Activated CD4-positive, alpha-beta T cell treated with anti-CD3 and anti-CD28 coated beads, Interleukin-2, amount 10 ng/mL, durations not matched to agents 24 days and 14 days (primary cell): ENCODE measurements at regions of chr9 and their contacts with region 1.

Region 1: DNA sequence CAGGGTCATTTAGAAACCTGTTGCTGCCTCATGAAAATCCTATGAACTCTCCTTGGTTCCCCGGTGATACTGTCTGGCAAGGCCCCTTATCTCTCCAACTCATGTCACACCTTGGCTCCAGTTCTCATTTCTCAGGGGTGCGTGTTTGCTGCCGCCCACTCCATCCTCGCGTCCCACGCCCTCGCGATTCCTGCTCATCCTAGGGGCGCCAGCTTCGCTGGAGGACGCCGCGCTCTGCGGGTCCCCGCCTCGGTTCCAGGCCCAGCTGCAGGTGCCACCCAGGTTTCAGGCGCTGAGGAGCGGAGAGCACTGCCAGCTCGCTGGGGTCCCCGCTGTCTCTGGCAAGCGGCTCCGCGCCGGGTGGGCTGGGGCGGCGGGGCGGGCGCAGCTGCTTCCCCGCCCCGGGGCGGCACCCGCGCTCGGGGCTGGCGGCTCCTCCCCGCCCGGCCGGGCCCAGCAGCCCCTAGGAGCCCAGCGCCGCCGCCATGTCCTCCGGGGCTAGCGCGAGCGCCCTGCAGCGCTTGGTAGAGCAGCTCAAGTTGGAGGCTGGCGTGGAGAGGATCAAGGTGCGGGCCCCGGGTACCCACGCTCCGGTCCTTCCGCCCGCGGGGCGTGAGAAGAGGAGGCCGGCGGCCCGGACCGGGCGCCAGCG is at the start of gene GNG10:
- DNase-seq: peak; percentile 92
- H3K4me3 Mint-ChIP-seq: peak within 1 kb of the TSS; percentile 90
- H3K27ac Mint-ChIP-seq: peak within 1 kb of the TSS; percentile 97
- H3K4me1 Mint-ChIP-seq: peaks cover 28% of the 10 kb centered on the region
- H3K27me3 Mint-ChIP-seq: no peaks in the 10 kb centered on the region
- total RNA-seq, gene GNG10: 30.9 and 31.7 TPM in 2 replicates

Region 2: DNA sequence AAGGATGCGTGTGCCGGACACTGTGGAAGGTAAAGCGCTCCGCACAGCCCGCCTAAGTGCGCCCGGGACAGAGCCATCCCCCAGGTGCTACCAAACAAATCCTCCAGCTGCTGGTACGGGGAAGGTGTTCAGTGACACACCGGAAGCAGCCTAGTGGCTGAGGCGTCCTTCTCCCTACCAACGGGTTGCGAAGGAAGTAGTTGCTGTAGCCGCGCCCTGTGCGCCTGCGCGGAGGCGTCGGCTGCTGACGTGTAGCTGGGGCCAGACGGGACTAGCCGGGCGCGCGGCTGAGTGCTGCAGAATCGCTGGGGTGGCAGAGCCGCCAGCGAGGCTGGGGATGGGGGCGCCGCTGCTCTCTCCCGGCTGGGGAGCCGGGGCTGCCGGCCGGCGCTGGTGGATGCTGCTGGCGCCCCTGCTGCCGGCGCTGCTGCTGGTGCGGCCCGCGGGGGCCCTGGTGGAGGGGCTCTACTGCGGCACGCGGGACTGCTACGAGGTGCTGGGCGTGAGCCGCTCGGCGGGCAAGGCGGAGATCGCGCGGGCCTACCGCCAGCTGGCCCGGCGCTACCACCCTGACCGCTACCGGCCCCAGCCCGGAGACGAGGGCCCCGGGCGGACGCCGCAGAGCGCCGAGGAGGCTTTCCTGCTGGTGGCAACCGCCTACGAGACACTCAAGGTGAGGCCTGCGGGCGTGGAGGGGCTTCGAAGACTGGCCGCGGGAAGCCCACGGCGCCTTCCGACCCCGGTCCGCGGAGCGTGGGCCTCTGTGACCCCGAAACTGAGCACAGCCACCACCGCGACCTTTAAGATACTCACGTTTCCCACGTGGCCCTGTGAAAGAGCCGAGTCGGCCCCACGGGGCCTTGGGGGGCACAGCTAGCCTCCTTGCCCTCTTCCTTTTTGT is 30.0 kb before region 1 on chr9 and contains the start of gene DNAJC25:
- intact Hi-C with region 1: loop called (anchors 1 kb)
- DNase-seq: peak; percentile 99
- H3K4me3 Mint-ChIP-seq: peak within 1 kb of the TSS; percentile 98
- H3K27ac Mint-ChIP-seq: peak within 1 kb of the TSS; percentile 92
- H3K4me1 Mint-ChIP-seq: peaks cover 42% of the 10 kb centered on the region
- H3K27me3 Mint-ChIP-seq: no peaks in the 10 kb centered on the region
- total RNA-seq, gene DNAJC25: 7.1 and 7.5 TPM in 2 replicates

Region 3: DNA sequence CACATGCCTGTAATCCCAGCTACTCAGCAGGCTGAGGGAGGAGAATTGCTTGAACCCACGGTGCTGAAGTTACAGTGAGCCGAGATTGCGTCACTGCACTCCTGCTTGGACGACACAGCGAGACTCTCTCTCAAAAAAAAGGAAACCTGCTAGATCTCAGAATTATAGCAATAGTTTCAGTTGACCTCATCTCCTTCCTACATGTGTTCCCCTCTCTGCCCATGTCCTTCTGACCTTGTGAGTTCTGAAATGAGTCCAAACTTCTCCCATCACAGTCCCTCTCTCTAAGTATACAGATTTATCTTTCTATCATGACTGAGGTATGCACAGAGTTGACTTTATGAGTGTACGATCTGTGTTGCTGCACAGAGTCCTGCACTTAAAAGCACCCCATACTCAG is 178.1 kb after region 1 on chr9:
- intact Hi-C with region 1: no loop called
- DNase-seq: no peak
- H3K4me3 Mint-ChIP-seq: no peak overlapping the region
- H3K27ac Mint-ChIP-seq: no peak overlapping the region
- H3K4me1 Mint-ChIP-seq: peaks cover 2% of the 10 kb centered on the region
- H3K27me3 Mint-ChIP-seq: peaks cover 15% of the 10 kb centered on the region